Heart left ventricle (tissue), 16 donors: ENCODE measurements at regions of chr7 and their contacts with region 1.

Region 1: DNA sequence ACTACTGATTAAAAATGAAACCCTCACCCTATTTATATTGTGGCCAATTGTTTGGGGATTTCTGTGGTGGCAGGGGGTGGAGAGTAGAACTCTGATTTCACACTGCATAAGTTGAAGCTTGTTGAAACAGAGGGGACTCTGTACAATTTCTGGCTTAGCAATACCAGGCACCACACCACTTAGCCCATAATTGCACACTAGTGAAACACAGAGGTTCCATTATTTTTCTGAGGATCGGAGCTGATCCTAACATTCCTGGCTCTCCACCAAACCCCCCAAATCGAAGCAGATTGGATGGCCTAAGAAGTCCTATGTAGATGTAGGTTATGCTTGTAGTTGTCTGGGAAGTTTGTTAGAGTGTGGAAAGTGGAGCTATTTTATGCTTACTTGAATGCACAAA is 47.0 kb downstream of the PTN start:
- DNase-seq: no peak
- ATAC-seq: no peak
- H3K4me3 ChIP-seq: no peak overlapping the region
- H3K27ac ChIP-seq: no peak overlapping the region
- H3K4me1 ChIP-seq: peaks cover 0 to 7% (median 0%) of the 10 kb centered on the region in 12 donors
- H3K27me3 ChIP-seq: no peaks in the 10 kb centered on the region
- CTCF ChIP-seq: no peak
- POLR2A ChIP-seq: no peak

Region 2: DNA sequence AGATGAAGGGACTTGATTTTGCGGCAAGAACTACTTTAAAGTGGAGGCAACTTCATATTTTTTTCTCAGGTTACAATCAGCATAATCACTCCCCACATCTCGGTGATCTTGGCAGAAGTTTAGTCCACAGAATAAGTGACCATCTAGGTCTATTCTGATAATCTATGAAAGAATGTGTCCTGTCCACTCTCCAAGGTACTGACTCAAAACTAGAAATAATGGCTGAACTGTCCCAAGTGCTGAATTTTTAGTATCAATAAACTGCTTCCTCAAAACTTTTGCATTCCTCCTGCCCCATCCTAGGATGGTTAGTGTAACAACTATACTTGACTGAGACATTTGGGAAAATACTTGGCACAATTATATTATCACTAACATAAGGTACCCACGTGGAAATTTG is 439.0 kb before region 1 on chr7:
- intact Hi-C with region 1: loop called in 1 of 10 experiments (anchors 5 kb)
- DNase-seq: no peak
- ATAC-seq: no peak
- H3K4me3 ChIP-seq: no peak overlapping the region
- H3K27ac ChIP-seq: no peak overlapping the region
- H3K4me1 ChIP-seq: no peaks in the 10 kb centered on the region
- H3K27me3 ChIP-seq: no peaks in the 10 kb centered on the region
- CTCF ChIP-seq: no peak
- POLR2A ChIP-seq: no peak